Upper lobe of right lung (tissue), 1 donor: ENCODE measurements at regions of chr2 and their contacts with region 1.

Region 1: DNA sequence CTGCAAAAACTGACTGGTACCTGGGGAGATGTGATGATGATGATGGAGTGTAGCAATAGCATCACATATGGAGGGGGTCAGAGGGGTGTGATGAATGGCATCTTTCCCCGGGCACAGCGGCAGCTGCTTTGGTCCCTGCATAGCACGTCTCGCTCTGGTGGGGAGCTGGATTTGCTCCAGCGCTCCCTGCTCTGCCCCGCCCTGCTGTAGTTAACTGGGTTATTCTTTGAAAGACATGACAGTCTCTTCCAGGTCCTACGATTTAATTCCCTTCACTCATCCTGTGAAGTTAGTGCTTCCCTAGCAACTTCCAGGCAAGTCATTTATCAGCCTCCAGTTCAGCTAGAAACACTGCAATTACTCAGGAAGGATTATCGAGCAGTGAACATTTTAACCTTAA is 463.1 kb downstream of the TSN start:
- DNase-seq: no peak
- ATAC-seq: no peak
- H3K4me3 ChIP-seq: no peak overlapping the region
- H3K27ac ChIP-seq: no peak overlapping the region
- H3K4me1 ChIP-seq: no peaks in the 10 kb centered on the region
- H3K27me3 ChIP-seq: no peaks in the 10 kb centered on the region
- CTCF ChIP-seq: no peak

Region 2: GRCh38 chr2:122150524-122151280 is 67.9 kb before region 1 on chr2:
- intact Hi-C with region 1: loop called (anchors 5 kb)
- DNase-seq: no peak
- ATAC-seq: no peak
- H3K4me3 ChIP-seq: no peak overlapping the region
- H3K27ac ChIP-seq: no peak overlapping the region
- H3K4me1 ChIP-seq: no peaks in the 10 kb centered on the region
- H3K27me3 ChIP-seq: no peaks in the 10 kb centered on the region
- CTCF ChIP-seq: no peak